ENCODE measurements at regions of chr19 and their contacts with region 1.

Region 1: GRCh38 chr19:28878862-28879566 is 333.9 kb downstream of the UQCRFS1 start:
- DNase-seq: peak; percentile 63 to 80 (median 66)
- ATAC-seq: peak; percentile 91
- H3K4me3 ChIP-seq: no peak overlapping the region
- H3K27ac ChIP-seq: no peak overlapping the region
- H3K4me1 ChIP-seq: no peaks in the 10 kb centered on the region
- H3K27me3 ChIP-seq: peaks cover 4 to 13% of the 10 kb centered on the region in 2 experiments; a peak in 2 of 5 replicates
- CTCF ChIP-seq: peak; percentile 64 to 85 (median 74)
- EP300 ChIP-seq: no peak
- POLR2A ChIP-seq: no peak
- RAD21 ChIP-seq: peak; percentile 65 to 82

Region 2: GRCh38 chr19:28324275-28325060 is 554.5 kb before region 1 on chr19:
- CTCF ChIA-PET with region 1: no interaction called
- POLR2A ChIA-PET with region 1: no interaction called
- in situ Hi-C with region 1: no loop called
- intact Hi-C with region 1: loop called (anchors 10 kb)
- DNase-seq: no peak
- ATAC-seq: no peak
- H3K4me3 ChIP-seq: no peak overlapping the region
- H3K27ac ChIP-seq: no peak overlapping the region
- H3K4me1 ChIP-seq: no peaks in the 10 kb centered on the region
- H3K27me3 ChIP-seq: no peaks in the 10 kb centered on the region
- CTCF ChIP-seq: no peak
- EP300 ChIP-seq: no peak
- POLR2A ChIP-seq: no peak
- RAD21 ChIP-seq: no peak

Region 3: GRCh38 chr19:28454083-28454482 is 424.9 kb before region 1 on chr19:
- CTCF ChIA-PET with region 1: no interaction called
- POLR2A ChIA-PET with region 1: no interaction called
- in situ Hi-C with region 1: loop called (anchors 10 kb)
- intact Hi-C with region 1: no loop called
- DNase-seq: peak in 1 of 4 experiments; percentile 26
- ATAC-seq: peak; percentile 70
- H3K4me3 ChIP-seq: no peak overlapping the region
- H3K27ac ChIP-seq: peak overlapping the region; percentile 27; the same call in 1 of the 3 replicates
- H3K4me1 ChIP-seq: peaks cover 3% of the 10 kb centered on the region in 2 experiments; a peak in 3 of 5 replicates
- H3K27me3 ChIP-seq: no peaks in the 10 kb centered on the region
- CTCF ChIP-seq: no peak
- EP300 ChIP-seq: no peak
- POLR2A ChIP-seq: no peak
- RAD21 ChIP-seq: no peak

Region 4: GRCh38 chr19:28466107-28467045 is 412.6 kb before region 1 on chr19:
- CTCF ChIA-PET with region 1: interaction called, 3 read pairs
- POLR2A ChIA-PET with region 1: no interaction called
- in situ Hi-C with region 1: no loop called
- intact Hi-C with region 1: loop called (anchors 10 kb)
- DNase-seq: peak; percentile 66 to 81 (median 71)
- ATAC-seq: peak; percentile 73
- H3K4me3 ChIP-seq: no peak overlapping the region
- H3K27ac ChIP-seq: peak overlapping the region; percentile 6; the same call in 1 of the 3 replicates
- H3K4me1 ChIP-seq: peaks cover 2 to 16% of the 10 kb centered on the region in 2 experiments; a peak in 3 of 5 replicates
- H3K27me3 ChIP-seq: no peaks in the 10 kb centered on the region
- CTCF ChIP-seq: peak; percentile 73 to 84 (median 80)
- EP300 ChIP-seq: no peak
- POLR2A ChIP-seq: no peak
- RAD21 ChIP-seq: peak; percentile 65 to 77

Region 5: DNA sequence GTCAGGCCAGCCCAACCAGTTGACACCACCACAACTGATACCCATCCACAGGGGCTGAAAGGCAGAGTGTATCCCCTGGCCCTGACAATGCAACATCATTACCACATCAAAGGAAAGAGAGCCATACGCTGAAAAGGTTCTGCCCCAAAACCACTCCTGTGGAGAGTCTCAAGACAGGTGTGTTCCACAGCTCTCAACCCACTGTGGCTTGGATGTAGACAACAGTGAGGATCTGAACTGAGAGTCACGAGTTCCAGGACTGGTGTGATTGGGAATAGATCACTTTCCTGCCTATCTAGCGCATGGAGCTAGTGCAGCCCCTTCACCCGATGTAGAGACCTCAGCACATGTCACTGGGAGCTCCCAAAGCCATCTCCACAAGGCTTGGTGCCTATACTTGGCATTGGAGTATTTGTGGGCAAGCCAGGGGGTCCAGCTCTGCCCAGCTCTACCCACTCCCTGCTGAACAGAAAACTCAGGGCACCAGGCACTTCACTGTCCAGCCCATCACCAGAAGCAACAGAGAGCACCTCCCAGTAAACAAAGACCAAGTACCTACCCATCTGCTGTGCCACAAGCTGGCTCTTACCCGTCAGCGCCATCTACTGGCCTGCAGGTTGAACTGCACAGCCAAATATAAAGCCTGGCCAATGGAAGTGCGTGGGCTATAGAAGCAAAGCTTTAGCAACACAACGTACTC is 245.5 kb before region 1 on chr19:
- CTCF ChIA-PET with region 1: no interaction called
- POLR2A ChIA-PET with region 1: interaction called, 3 read pairs
- in situ Hi-C with region 1: no loop called
- intact Hi-C with region 1: loop called (anchors 10 kb)
- DNase-seq: peak; percentile 73 to 83 (median 78)
- ATAC-seq: peak; percentile 90
- H3K4me3 ChIP-seq: no peak overlapping the region
- H3K27ac ChIP-seq: no peak overlapping the region; the same call in 2 of the 3 replicates
- H3K4me1 ChIP-seq: peaks cover 8 to 16% of the 10 kb centered on the region in 2 experiments; a peak in 4 of 5 replicates
- H3K27me3 ChIP-seq: no peaks in the 10 kb centered on the region
- CTCF ChIP-seq: peak; percentile 92 to 97 (median 96)
- EP300 ChIP-seq: peak; percentile 30; the same call in 1 of the 2 replicates
- POLR2A ChIP-seq: no peak
- RAD21 ChIP-seq: peak; percentile 89 to 98

Region 6: GRCh38 chr19:28737021-28737895 is 141.8 kb before region 1 on chr19:
- CTCF ChIA-PET with region 1: interaction called, 6 read pairs
- POLR2A ChIA-PET with region 1: no interaction called
- in situ Hi-C with region 1: loop called (anchors 10 kb)
- intact Hi-C with region 1: loop called (anchors 1 kb)
- DNase-seq: peak in 2 of 4 experiments; percentile 27 to 28
- ATAC-seq: peak; percentile 82
- H3K4me3 ChIP-seq: no peak overlapping the region
- H3K27ac ChIP-seq: no peak overlapping the region
- H3K4me1 ChIP-seq: no peaks in the 10 kb centered on the region
- H3K27me3 ChIP-seq: no peaks in the 10 kb centered on the region; a peak in 1 of 5 replicates
- CTCF ChIP-seq: peak; percentile 37 to 77 (median 45); a peak in 5 of 6 replicates
- EP300 ChIP-seq: no peak
- POLR2A ChIP-seq: no peak
- RAD21 ChIP-seq: peak in 1 of 2 experiments; percentile 73; a peak in 2 of 4 replicates

Region 7: DNA sequence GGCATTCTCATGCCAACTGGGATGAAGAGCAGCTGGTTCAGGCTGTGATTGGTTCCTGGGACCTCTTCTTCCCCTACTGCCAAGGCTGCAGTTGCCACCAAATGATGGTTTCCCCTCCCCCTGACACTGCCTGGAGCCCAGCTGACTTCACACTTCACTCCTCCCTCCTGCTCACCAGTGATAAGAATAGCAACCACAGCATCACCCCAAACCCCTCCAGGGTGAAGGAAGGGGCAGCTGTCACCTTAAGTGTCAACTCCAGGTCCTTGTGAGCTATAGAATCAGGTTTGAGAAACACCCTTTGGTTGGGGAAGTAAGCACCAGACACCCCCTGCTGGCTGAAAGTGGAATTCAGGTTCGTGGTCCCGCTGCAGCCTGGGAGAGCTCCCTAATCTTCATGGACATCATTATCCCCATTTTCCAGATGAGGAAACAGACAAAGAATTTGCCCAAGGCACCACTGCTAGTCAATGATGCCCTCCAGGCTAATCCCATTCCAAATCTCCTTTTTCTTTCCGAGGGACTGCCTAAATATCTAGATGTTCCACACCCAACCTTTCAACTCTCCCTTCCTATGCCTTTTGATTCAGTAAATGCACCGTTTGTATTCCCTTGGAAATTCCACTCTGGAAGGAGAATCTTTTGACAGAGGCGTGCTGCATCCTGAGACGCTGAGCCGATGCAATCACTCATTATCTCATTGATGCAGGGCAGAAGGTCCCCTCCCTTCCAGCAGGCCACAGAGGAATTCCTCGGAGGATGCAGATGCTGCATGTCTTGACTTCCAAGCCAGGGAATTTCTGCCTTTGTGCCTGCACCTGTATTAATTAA is 384.5 kb after region 1 on chr19:
- CTCF ChIA-PET with region 1: interaction called, 3 read pairs
- POLR2A ChIA-PET with region 1: no interaction called
- in situ Hi-C with region 1: loop called (anchors 10 kb)
- intact Hi-C with region 1: no loop called
- DNase-seq: peak; percentile 57 to 68 (median 60)
- ATAC-seq: peak; percentile 83
- H3K4me3 ChIP-seq: no peak overlapping the region
- H3K27ac ChIP-seq: no peak overlapping the region
- H3K4me1 ChIP-seq: no peaks in the 10 kb centered on the region
- H3K27me3 ChIP-seq: peaks cover 5 to 17% of the 10 kb centered on the region in 2 experiments; a peak in 3 of 5 replicates
- CTCF ChIP-seq: peak; percentile 68 to 82 (median 76)
- EP300 ChIP-seq: no peak
- POLR2A ChIP-seq: no peak
- RAD21 ChIP-seq: peak in 1 of 2 experiments; percentile 69; a peak in 2 of 4 replicates

Measured in K562 (cell line).